ENCODE measurements at regions of chr11 and their contacts with region 1.

Region 1: DNA sequence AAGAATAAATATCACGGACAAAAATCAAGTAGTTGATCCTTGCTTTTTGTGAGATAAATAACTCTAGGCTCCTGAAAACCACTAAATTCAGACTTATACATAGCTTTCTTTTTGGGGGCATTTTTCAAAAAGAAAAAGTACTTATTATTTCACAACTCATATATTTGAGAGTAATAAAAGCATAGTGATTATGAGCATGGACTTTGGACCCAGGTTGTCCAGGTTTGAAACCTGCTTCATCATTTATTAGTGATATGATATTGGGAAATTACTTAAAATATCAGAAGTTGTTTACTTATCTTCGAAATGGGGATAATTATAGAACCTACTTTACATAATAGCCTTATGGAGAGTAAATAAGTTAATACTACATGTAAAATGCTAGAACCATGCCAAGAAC is 17.0 kb upstream of the LDHAL6A start:
- DNase-seq: no peak
- H3K4me3 ChIP-seq: no peak overlapping the region
- H3K27ac ChIP-seq: no peak overlapping the region
- H3K4me1 ChIP-seq: no peaks in the 10 kb centered on the region
- H3K27me3 ChIP-seq: no peaks in the 10 kb centered on the region
- CTCF ChIP-seq: no peak

Region 2: GRCh38 chr11:18419040-18419439 is 19.7 kb before region 1 on chr11:
- CTCF ChIA-PET with region 1: no interaction called
- POLR2A ChIA-PET with region 1: interaction called, 17 read pairs
- intact Hi-C with region 1: no loop called
- DNase-seq: no peak
- H3K4me3 ChIP-seq: no peak overlapping the region
- H3K27ac ChIP-seq: no peak overlapping the region
- H3K4me1 ChIP-seq: no peaks in the 10 kb centered on the region
- H3K27me3 ChIP-seq: no peaks in the 10 kb centered on the region
- CTCF ChIP-seq: no peak